Caco-2 (cell line): ENCODE measurements at regions of chr21 and their contacts with region 1.

Region 1: DNA sequence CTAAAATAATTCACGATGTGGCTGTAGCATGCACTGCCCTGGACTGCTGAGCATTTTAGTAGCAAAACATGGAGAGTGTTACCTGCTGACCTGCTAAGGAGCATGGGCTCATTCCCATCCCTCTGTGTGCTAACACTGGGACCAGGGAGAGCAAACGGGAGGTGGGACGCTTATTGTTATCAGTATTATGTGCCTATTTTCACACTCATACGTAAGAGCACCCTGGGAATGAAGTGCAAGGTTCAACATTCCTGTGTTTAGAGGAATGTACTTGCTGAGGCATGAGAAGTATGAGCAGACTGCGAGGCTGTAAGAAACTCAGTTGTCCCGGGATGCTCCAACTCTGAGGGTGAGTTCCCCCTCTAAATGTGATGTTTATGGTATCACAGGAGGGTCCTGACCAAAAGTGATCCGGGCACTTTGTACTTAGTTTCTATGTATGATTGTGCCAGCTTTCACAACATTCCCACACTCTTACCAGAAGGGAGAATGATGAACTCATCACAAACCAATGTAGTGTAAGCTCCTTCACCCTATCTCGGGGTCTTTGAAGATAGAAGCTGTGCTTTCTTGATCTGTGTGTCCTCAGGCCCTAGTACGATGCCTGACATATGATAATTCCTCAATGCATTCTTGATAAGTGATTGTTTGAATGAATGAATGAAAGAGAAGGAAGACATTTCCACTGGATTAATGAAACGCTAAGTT is 164.8 kb downstream of the KCNJ6 start:
- DNase-seq: peak; percentile 63 to 77
- H3K4me3 ChIP-seq: no peak overlapping the region
- H3K4me3 Mint-ChIP-seq: peak overlapping the region; percentile 33
- H3K27ac Mint-ChIP-seq: peak overlapping the region; percentile 86
- H3K4me1 ChIP-seq: peaks cover 20% of the 10 kb centered on the region
- H3K4me1 Mint-ChIP-seq: peaks cover 34% of the 10 kb centered on the region
- H3K27me3 ChIP-seq: no peaks in the 10 kb centered on the region
- H3K27me3 Mint-ChIP-seq: no peaks in the 10 kb centered on the region
- CTCF ChIP-seq: no peak

Region 2: GRCh38 chr21:37642493-37642892 is 108.9 kb before region 1 on chr21:
- CTCF ChIA-PET with region 1: no interaction called
- POLR2A ChIA-PET with region 1: no interaction called
- intact Hi-C with region 1: no loop called
- DNase-seq: peak; percentile 51 to 54
- H3K4me3 ChIP-seq: no peak overlapping the region
- H3K4me3 Mint-ChIP-seq: no peak overlapping the region
- H3K27ac Mint-ChIP-seq: no peak overlapping the region
- H3K4me1 ChIP-seq: no peaks in the 10 kb centered on the region
- H3K4me1 Mint-ChIP-seq: peaks cover 10% of the 10 kb centered on the region
- H3K27me3 ChIP-seq: no peaks in the 10 kb centered on the region
- H3K27me3 Mint-ChIP-seq: peaks cover 7% of the 10 kb centered on the region
- CTCF ChIP-seq: peak; percentile 11 to 40

Region 3: DNA sequence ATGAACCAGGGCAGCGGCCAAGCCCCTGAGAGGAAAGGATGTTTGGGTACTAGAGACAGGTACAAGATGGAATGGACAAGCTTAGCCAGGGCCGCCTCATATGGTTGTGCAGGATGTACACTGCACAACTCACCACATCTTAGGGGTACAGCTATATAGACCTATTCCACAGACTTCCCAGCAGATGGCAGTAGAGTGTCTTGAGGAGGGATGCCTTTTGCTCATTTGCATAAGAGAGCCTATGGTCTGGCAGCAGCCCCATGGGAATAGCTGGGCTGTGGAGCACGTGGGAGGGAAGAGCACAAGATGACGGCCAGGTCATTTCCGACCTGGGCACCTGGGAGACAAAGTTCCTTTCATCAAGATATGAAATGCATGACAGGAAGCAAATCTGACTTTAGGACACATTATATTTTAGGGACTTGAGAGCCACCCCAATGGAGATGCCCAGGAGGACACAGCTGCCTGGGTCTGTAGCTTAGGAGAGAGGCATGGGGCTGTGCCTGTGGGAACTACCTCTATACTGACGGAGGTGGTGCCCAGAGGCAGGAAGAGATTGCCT is 50.7 kb before region 1 on chr21:
- CTCF ChIA-PET with region 1: no interaction called
- POLR2A ChIA-PET with region 1: no interaction called
- intact Hi-C with region 1: loop called (anchors 5 kb)
- DNase-seq: peak; percentile 71 to 73
- H3K4me3 ChIP-seq: no peak overlapping the region
- H3K4me3 Mint-ChIP-seq: no peak overlapping the region
- H3K27ac Mint-ChIP-seq: no peak overlapping the region
- H3K4me1 ChIP-seq: peaks cover 7% of the 10 kb centered on the region
- H3K4me1 Mint-ChIP-seq: no peaks in the 10 kb centered on the region
- H3K27me3 ChIP-seq: no peaks in the 10 kb centered on the region
- H3K27me3 Mint-ChIP-seq: no peaks in the 10 kb centered on the region
- CTCF ChIP-seq: peak; percentile 61 to 65